BJ (cell line): ENCODE measurements at regions of chr3 and their contacts with region 1.

Region 1: GRCh38 chr3:139111392-139112229 is 66.9 kb upstream of the PRR23C start:
- DNase-seq: no peak
- H3K4me3 ChIP-seq: no peak overlapping the region
- H3K27me3 ChIP-seq: peaks cover 7% of the 10 kb centered on the region
- CTCF ChIP-seq: peak; percentile 88

Region 2: DNA sequence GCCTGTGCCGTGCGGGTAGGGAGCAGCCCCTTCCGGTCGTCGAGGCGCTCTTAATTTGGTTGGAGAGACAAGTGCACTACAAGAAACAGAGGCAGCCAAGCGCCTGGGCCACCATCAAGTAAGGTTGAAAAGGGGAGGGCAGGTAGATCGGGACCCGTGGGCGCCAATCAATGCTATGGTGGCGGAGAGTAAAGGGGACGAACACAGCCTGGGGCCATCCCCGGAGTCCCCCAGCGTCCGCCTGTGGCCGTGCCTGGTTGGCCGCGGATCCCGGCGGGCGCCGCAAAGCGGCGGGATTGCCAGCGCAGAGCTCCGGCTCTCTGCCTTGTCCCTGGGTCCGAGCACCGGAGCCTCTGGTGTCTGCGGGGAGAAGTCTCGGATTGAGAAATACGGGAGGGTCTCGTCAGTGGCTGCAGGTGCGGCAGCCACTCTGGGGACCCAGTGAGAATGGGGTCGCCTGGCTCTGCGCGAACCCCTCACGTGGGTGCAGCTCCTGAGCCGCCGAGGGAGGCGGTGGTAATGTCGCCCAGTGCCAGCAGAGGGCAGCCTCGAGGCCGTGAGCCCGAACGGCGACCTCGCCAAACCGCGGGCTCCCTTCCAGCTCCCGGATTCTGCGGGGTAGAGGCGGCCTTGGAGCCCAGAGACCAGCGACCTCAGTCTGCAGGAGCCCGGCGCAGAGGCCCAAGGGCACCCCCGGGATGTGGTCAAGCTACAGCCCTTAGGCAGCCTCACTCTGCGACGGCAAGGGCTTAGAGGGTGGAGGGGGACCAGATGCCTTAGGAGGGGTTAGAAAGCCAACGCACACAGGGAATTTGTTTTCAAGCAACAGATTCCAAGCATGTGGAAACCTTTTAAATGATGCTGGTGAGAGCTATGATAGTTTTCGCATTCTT is 175.5 kb before region 1 on chr3:
- CTCF ChIA-PET with region 1: interaction called, 15 read pairs
- POLR2A ChIA-PET with region 1: no interaction called
- DNase-seq: no peak
- H3K4me3 ChIP-seq: peak overlapping the region; percentile 28
- H3K27me3 ChIP-seq: peaks cover 53% of the 10 kb centered on the region
- CTCF ChIP-seq: peak; percentile 93

Region 3: GRCh38 chr3:139006051-139006716 is 105.4 kb before region 1 on chr3 and contains the start of gene PRR23A:
- CTCF ChIA-PET with region 1: no interaction called
- POLR2A ChIA-PET with region 1: no interaction called
- DNase-seq: no peak
- H3K4me3 ChIP-seq: no peak within 1 kb of the TSS
- H3K27me3 ChIP-seq: no peaks in the 10 kb centered on the region; the same call in 1 of the 2 replicates
- CTCF ChIP-seq: no peak
- polyA plus RNA-seq, gene PRR23A: not detected in 2 replicates

Region 4: GRCh38 chr3:139052802-139053600 is 58.6 kb before region 1 on chr3:
- CTCF ChIA-PET with region 1: no interaction called
- POLR2A ChIA-PET with region 1: no interaction called
- DNase-seq: no peak
- H3K4me3 ChIP-seq: no peak overlapping the region
- H3K27me3 ChIP-seq: no peaks in the 10 kb centered on the region
- CTCF ChIP-seq: no peak

Region 5: GRCh38 chr3:139101396-139101795 is 10.2 kb before region 1 on chr3:
- CTCF ChIA-PET with region 1: interaction called, 24 read pairs
- POLR2A ChIA-PET with region 1: no interaction called
- DNase-seq: no peak
- H3K4me3 ChIP-seq: no peak overlapping the region
- H3K27me3 ChIP-seq: peaks cover 3% of the 10 kb centered on the region; the same call in 1 of the 2 replicates
- CTCF ChIP-seq: no peak

Region 6: GRCh38 chr3:139202226-139202958 is 90.8 kb after region 1 on chr3:
- CTCF ChIA-PET with region 1: interaction called, 11 read pairs
- POLR2A ChIA-PET with region 1: no interaction called
- DNase-seq: no peak
- H3K4me3 ChIP-seq: no peak overlapping the region
- H3K27me3 ChIP-seq: no peaks in the 10 kb centered on the region
- CTCF ChIP-seq: no peak

Region 7: DNA sequence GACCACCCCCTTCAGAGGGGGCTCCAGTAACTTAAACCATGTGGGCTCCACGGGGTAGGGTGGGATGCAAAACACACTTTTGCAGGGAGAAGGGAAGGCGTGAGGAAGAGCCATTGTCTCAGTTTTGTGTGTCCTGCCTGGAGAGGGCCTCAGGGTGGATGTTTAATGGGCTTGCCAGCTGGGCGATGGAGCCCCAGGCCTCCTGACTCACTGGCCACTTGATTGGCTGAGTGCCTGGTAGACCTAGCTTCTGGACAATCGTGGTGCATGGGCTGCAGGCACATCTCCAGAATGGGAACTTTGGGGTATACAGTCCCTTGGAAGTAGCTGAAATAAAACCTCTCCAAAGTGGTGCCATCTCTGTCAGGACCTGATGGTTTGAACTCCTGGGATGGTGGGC is 113.9 kb after region 1 on chr3:
- CTCF ChIA-PET with region 1: no interaction called
- POLR2A ChIA-PET with region 1: no interaction called
- DNase-seq: no peak
- H3K4me3 ChIP-seq: no peak overlapping the region
- H3K27me3 ChIP-seq: no peaks in the 10 kb centered on the region
- CTCF ChIP-seq: no peak

Region 8: GRCh38 chr3:139302084-139302800 is 190.6 kb after region 1 on chr3:
- CTCF ChIA-PET with region 1: interaction called, 12 read pairs
- POLR2A ChIA-PET with region 1: no interaction called
- DNase-seq: peak; percentile 99
- H3K4me3 ChIP-seq: no peak overlapping the region
- H3K27me3 ChIP-seq: no peaks in the 10 kb centered on the region
- CTCF ChIP-seq: no peak

Region 9: GRCh38 chr3:139319428-139320402 is 208.1 kb after region 1 on chr3:
- CTCF ChIA-PET with region 1: interaction called, 40 read pairs
- POLR2A ChIA-PET with region 1: no interaction called
- DNase-seq: no peak
- H3K4me3 ChIP-seq: no peak overlapping the region
- H3K27me3 ChIP-seq: no peaks in the 10 kb centered on the region
- CTCF ChIP-seq: peak; percentile 38

Region 10: GRCh38 chr3:139339219-139339906 is 227.8 kb after region 1 on chr3:
- CTCF ChIA-PET with region 1: interaction called, 15 read pairs
- POLR2A ChIA-PET with region 1: no interaction called
- DNase-seq: no peak
- H3K4me3 ChIP-seq: no peak overlapping the region
- H3K27me3 ChIP-seq: no peaks in the 10 kb centered on the region
- CTCF ChIP-seq: no peak